Right ventricle myocardium inferior (tissue), 1 donor: ENCODE measurements at regions of chr1 and their contacts with region 1.

Region 1: GRCh38 chr1:198340139-198340538 is 183.3 kb downstream of the NEK7 start:
- DNase-seq: no peak
- ATAC-seq: no peak

Region 2: DNA sequence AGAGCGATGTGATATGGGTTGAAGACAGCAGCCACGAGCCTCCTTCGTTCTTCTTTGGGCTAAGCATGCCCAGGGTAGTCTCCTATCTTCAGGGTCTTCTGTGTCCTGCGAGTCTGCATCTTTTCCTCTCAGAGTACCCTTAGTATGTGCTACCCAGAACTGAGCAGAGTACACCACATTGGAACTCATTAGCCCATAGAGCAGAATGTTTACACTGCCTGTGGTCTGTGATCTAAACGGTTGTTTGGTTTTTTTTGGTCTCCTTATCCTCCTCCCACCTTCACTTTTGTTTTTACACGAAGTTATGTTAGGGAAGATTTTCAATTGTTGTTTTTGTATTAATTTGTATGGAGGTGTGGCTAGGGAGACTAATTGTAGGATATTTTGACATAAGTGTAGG is 56.9 kb before region 1 on chr1:
- intact Hi-C with region 1: loop called (anchors 10 kb)
- DNase-seq: no peak
- ATAC-seq: no peak

Region 3: DNA sequence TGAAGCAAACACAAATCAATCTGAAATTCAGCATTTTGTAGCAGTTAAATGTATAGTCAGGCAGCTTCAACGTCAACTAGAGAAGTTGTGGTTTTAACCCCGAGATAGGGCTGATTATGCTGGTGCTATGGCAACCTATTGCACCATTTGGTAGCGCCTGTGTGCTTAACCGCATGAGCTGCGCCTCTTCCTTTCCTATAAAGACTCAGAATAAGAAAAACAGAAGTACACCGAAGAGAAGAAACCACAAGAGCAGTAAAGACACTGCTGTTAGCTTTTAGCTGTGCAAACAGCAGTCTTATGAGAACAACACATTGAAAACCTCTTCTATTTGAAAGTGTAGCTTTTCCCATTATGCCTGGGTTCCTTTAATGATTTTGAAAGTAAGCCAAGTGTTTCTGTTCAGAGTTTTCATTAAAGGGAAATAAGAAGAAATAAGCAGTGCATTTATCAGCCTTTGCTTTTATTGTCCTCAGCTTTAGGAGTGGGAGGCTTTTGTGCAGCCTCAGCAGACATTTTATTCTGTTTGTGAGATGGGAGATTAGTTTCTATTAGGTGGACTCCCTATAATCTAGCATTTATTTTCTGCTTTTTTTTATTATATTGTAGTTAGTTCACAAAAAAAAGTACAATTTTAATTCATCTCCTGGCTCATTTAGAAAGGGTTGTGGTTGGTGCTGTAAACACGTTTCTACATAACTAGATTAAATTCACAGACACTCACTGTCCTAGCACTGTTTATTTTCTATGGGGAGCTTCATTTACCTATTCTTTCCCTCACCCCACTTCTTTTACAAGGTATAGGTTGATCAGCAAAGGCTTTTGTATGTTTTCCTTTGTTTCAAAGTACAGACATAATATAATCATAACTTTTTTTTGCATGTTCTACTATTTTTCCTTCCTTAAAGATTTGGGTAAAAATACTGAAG is 342.0 kb after region 1 on chr1:
- intact Hi-C with region 1: no loop called
- DNase-seq: peak; percentile 73
- ATAC-seq: peak; percentile 84